ENCODE measurements at regions of chr6 and their contacts with region 1.

Region 1: DNA sequence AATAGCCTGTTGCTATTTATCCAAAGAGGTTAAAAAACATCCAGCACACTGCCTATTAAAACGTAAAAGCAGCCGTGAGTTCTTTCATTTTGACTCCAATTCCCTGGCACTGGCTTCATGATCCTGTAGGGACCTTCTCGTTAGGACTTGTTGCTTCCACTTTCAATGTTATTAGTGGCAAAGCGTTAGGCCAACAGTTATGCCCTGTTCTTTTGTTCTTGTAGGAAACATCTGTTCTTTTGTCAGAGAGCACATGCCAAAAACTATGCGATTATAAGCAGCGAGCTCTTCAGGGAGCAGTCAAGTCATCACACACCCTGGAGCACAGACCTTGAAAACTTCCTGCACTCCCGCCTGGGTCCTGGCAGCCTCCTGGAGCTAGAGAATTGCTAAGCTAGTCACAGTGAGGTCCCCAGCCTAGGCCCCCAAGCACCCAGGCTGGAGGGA is 609.5 kb upstream of the ARID1B start:
- DNase-seq: peak; percentile 98
- H3K4me3 ChIP-seq: peak overlapping the region in 1 of 3 experiments; percentile 18
- H3K27ac ChIP-seq: peak overlapping the region; percentile 68
- H3K4me1 ChIP-seq: peaks cover 17% of the 10 kb centered on the region
- H3K27me3 ChIP-seq: no peaks in the 10 kb centered on the region
- CTCF ChIP-seq: no peak
- POLR2A ChIP-seq: peak; percentile 24

Region 2: DNA sequence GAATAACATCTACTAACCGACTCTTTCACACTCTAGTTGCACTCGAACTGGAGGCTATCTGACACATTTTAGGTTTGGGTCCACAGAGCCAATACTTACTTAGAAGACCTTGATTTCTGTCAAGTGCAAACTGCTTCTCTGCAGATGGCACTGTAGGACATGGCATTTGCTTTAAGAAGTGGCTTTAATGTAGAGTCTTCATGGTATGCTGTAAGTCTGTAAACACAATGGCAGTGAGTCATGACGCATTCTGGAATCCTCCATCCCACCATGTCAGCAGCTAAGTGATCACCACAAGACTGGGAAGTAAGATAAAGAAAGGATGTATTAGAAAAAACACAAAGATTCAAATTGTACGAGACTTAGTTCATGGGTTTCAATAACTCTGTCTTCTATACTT is 335.1 kb before region 1 on chr6:
- CTCF ChIA-PET with region 1: no interaction called
- POLR2A ChIA-PET with region 1: no interaction called
- dilution Hi-C with region 1: no loop called
- intact Hi-C with region 1: loop called (anchors 2 kb)
- DNase-seq: peak; percentile 87
- H3K4me3 ChIP-seq: no peak overlapping the region
- H3K27ac ChIP-seq: no peak overlapping the region
- H3K4me1 ChIP-seq: no peaks in the 10 kb centered on the region
- H3K27me3 ChIP-seq: no peaks in the 10 kb centered on the region
- CTCF ChIP-seq: peak in 1 of 2 donors; percentile 12
- POLR2A ChIP-seq: no peak

Region 3: GRCh38 chr6:155882527-155883333 is 284.9 kb before region 1 on chr6:
- CTCF ChIA-PET with region 1: interaction called, 3 read pairs
- POLR2A ChIA-PET with region 1: no interaction called
- dilution Hi-C with region 1: no loop called
- intact Hi-C with region 1: loop called (anchors 5 kb)
- DNase-seq: peak; percentile 60
- H3K4me3 ChIP-seq: no peak overlapping the region
- H3K27ac ChIP-seq: peak overlapping the region; percentile 53
- H3K4me1 ChIP-seq: peaks cover 43% of the 10 kb centered on the region
- H3K27me3 ChIP-seq: no peaks in the 10 kb centered on the region
- CTCF ChIP-seq: no peak
- POLR2A ChIP-seq: no peak

Region 4: GRCh38 chr6:156154896-156155295 is 12.8 kb before region 1 on chr6:
- CTCF ChIA-PET with region 1: no interaction called
- POLR2A ChIA-PET with region 1: no interaction called
- dilution Hi-C with region 1: no loop called
- intact Hi-C with region 1: no loop called
- DNase-seq: peak; percentile 81
- H3K4me3 ChIP-seq: no peak overlapping the region
- H3K27ac ChIP-seq: no peak overlapping the region
- H3K4me1 ChIP-seq: peaks cover 7% of the 10 kb centered on the region
- H3K27me3 ChIP-seq: no peaks in the 10 kb centered on the region
- CTCF ChIP-seq: no peak
- POLR2A ChIP-seq: no peak

Region 5: GRCh38 chr6:156348424-156348823 is 180.8 kb after region 1 on chr6:
- CTCF ChIA-PET with region 1: interaction called, 3 read pairs
- POLR2A ChIA-PET with region 1: no interaction called
- dilution Hi-C with region 1: no loop called
- intact Hi-C with region 1: loop called (anchors 1 kb)
- DNase-seq: peak; percentile 86
- H3K4me3 ChIP-seq: peak overlapping the region in 1 of 3 experiments; percentile 20
- H3K27ac ChIP-seq: peak overlapping the region; percentile 46
- H3K4me1 ChIP-seq: peaks cover 23% of the 10 kb centered on the region
- H3K27me3 ChIP-seq: no peaks in the 10 kb centered on the region
- CTCF ChIP-seq: no peak
- POLR2A ChIP-seq: no peak

Region 6: DNA sequence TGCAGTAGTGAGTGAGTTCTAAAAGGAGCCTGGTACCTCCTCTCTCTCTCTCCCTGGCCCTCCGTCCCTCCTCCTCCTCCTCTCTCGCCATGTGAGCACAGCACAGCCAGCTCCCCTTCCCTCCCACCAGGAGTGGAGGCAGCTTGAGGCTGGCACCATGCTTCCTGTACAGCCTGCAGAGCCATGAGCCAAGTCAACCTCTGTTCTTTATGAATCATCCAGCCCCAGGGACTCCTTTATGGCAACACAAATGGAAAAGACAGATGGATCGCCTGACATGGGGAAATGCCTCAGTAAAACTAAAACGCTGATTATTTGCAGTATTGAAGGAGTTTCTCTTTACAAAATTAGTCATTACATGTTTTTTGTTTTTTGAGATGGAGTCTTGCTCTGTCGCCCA is 375.8 kb after region 1 on chr6:
- CTCF ChIA-PET with region 1: no interaction called
- POLR2A ChIA-PET with region 1: no interaction called
- dilution Hi-C with region 1: no loop called
- intact Hi-C with region 1: no loop called
- DNase-seq: no peak
- H3K4me3 ChIP-seq: no peak overlapping the region
- H3K27ac ChIP-seq: no peak overlapping the region
- H3K4me1 ChIP-seq: no peaks in the 10 kb centered on the region
- H3K27me3 ChIP-seq: no peaks in the 10 kb centered on the region
- CTCF ChIP-seq: no peak
- POLR2A ChIP-seq: no peak

Measured in endothelial cell of umbilical vein (primary cell).